Dorsolateral prefrontal cortex (tissue), 120 donors: ENCODE measurements at regions of chrX and their contacts with region 1.

Region 1: DNA sequence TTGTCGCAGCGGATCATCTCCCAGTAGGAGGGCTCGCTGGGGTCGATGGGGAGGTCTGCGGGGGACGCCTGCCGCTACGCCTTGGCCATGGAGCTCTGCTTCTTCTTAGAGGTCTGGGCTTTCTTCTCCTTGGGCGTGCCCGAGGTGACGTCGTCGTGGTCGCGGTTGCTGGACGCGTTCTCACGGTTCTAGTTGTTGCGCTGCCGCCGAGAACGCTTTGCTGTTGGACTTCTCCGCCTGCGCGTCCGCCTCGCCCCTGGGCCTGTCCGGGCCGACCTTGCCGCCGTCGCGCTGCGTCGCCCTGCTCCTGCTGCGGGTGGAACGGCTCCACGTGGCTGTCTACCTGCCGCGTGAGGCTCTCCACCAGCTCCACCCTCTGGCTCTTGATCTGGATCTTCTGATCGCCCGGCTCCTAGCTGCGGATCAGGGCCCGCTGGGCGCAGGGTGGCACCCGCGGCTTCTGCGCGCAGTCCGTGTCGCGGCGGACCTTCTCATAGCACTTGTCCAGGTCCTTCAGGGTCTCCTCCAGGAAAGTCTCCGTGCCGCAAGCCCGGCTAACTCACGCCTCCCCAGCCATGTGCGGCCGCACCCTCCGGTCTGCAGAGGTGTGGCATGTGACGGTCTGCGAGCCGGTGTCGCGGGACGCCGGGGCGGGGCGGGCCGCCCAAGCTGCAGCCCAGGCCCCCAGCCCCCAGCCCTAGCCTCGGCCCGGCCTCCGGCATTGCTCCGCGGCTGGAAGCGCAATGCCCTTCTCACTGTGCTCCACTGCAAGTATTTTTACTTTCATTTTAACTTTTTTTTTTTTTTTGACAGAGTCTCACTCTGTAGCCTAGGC is 40.5 kb upstream of the OGT start:
- DNase-seq: peak in 8 of 10 donors; percentile 4 to 52 (median 30)
- H3K4me3 ChIP-seq: peak overlapping the region; percentile 22 to 74 (median 58)
- H3K27ac ChIP-seq: no peak overlapping the region
- H3K27me3 ChIP-seq: peaks cover 0 to 35% (median 0%) of the 10 kb centered on the region in 45 donors
- CTCF ChIP-seq: peak in 1 of 56 donors; percentile 11

Region 2: GRCh38 chrX:71532753-71533425 is 40.4 kb after region 1 on chrX and contains the start of gene OGT:
- intact Hi-C with region 1: loop called (anchors 2 to 5 kb)
- DNase-seq: peak; percentile 81 to 94 (median 90)
- H3K4me3 ChIP-seq: peak within 1 kb of the TSS; percentile 47 to 83 (median 71)
- H3K27ac ChIP-seq: peak within 1 kb of the TSS; percentile 57 to 96 (median 90)
- H3K27me3 ChIP-seq: peaks cover 0 to 33% (median 4%) of the 10 kb centered on the region in 45 donors
- CTCF ChIP-seq: peak in 10 of 56 donors; percentile 9 to 29 (median 16)
- total RNA-seq, gene OGT: 140 to 308 (median 220) TPM